ENCODE measurements at regions of chr11 and their contacts with region 1.

Region 1: GRCh38 chr11:23497040-23497439 is 636.8 kb upstream of the CCDC179 start:
- DNase-seq: no peak
- ATAC-seq: no peak
- H3K4me3 ChIP-seq: no peak overlapping the region
- H3K27ac ChIP-seq: no peak overlapping the region
- H3K4me1 ChIP-seq: peaks cover 6% of the 10 kb centered on the region; the same call in 1 of the 2 replicates
- H3K27me3 ChIP-seq: no peaks in the 10 kb centered on the region
- CTCF ChIP-seq: no peak

Region 2: GRCh38 chr11:23288003-23288783 is 208.8 kb before region 1 on chr11:
- CTCF ChIA-PET with region 1: no interaction called
- POLR2A ChIA-PET with region 1: no interaction called
- intact Hi-C with region 1: loop called (anchors 10 kb)
- DNase-seq: peak; percentile 81
- ATAC-seq: peak; percentile 83
- H3K4me3 ChIP-seq: no peak overlapping the region
- H3K27ac ChIP-seq: peak overlapping the region; percentile 88
- H3K4me1 ChIP-seq: peaks cover 16% of the 10 kb centered on the region
- H3K27me3 ChIP-seq: no peaks in the 10 kb centered on the region
- CTCF ChIP-seq: no peak